Activated CD4-positive, alpha-beta T cell treated with anti-CD3 and anti-CD28 coated beads, Interleukin-2, amount 10 ng/mL, durations not matched to agents 7 days and 5 days (primary cell): ENCODE measurements at regions of chr17 and their contacts with region 1.

Region 1: DNA sequence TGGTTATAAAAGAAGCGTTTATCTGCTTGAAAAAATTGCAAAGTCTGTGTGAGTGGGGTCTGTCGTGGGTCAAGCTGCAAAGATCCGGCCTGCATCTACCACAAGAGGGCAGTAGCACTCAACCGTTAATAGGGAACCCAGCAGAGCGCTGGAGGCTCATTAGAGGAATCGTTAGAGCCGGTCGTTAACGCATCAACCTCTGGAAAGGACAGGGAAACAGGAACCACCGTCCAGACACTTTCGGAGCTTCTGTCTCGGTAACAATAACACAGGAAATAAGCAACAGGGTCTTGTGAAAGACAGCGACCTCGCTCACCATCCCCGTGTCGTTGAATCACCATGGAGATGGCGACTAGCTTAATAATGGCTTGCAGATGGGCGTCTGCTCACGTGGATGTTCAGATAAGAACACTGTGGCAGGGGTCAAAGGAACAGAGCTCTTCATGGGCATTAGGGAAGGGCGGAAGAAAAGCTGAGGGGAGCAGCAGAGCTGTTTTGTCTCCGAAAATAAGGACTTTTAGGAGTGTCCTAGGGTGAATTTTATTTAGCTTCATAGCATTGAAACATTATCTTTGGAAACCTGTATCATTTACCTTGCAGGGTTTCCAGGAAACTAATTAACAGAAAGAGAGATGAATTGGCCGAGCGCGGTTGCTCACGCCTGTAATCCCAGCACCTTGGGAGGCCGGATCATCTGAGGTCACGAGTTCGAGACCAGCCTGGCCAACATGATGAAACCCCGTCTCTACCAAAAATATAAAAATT is 11.9 kb upstream of the NSRP1 start:
- DNase-seq: peak; percentile 79
- H3K4me3 Mint-ChIP-seq: peak overlapping the region; percentile 71
- H3K27ac Mint-ChIP-seq: no peak overlapping the region
- H3K4me1 Mint-ChIP-seq: peaks cover 6% of the 10 kb centered on the region
- H3K27me3 Mint-ChIP-seq: peaks cover 22% of the 10 kb centered on the region

Region 2: GRCh38 chr17:29977836-29978235 is 126.9 kb before region 1 on chr17:
- CTCF ChIA-PET with region 1: no interaction called
- POLR2A ChIA-PET with region 1: no interaction called
- DNase-seq: no peak
- H3K4me3 Mint-ChIP-seq: no peak overlapping the region
- H3K27ac Mint-ChIP-seq: no peak overlapping the region
- H3K4me1 Mint-ChIP-seq: no peaks in the 10 kb centered on the region
- H3K27me3 Mint-ChIP-seq: peaks cover 18% of the 10 kb centered on the region

Region 3: DNA sequence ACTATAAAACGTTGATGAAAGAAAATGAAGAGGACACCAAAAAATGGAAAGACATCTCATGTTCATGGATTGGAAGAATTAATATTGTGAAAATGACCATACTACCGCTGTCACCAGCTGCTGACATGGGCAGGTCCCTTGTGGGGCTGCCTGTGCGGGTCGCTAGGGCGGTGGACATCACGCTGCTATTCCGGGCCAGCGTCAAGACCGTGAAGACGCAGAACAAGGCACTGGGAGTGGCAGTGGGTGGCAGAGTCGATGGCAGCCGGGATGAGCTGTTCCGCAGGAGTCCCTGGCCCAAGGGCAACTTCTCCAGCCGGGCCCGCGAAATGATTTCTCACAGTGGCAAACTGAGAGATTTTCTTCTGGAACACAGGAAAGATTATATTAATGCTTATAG is 36.3 kb before region 1 on chr17:
- CTCF ChIA-PET with region 1: no interaction called
- POLR2A ChIA-PET with region 1: no interaction called
- DNase-seq: no peak
- H3K4me3 Mint-ChIP-seq: no peak overlapping the region
- H3K27ac Mint-ChIP-seq: no peak overlapping the region
- H3K4me1 Mint-ChIP-seq: no peaks in the 10 kb centered on the region
- H3K27me3 Mint-ChIP-seq: peaks cover 34% of the 10 kb centered on the region

Region 4: DNA sequence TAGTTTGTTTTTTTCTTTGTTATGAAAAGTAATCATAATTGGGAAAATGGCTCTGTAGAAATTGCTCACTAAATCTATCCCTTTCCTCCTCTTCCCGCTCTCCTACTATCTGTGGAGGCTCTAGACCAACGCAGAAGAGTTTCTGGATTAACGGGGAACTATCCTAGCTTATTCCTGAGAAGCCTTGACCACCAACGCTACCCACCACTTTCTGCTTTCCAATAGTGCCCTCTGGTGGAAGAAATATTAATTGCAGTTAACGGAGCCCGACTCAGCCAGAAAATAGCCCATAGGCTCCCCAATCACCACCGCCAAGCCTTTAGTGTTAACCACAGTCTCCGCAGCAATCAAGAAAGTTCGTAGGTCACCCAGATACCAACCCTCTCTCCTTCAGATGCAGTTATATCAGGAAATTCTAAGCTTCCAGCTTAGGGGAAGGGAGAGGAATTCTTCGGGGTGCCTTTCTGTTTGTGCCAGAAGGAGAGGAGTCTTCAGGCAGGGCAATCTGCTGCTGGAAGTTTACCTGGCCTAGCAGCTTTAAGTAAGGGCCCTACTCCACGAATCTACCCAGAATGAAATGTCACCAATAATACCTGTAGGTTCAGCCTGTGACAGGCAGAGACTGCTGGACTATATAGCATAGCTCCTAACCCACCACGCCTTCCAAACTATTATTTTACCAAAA is 11.2 kb before region 1 on chr17:
- CTCF ChIA-PET with region 1: interaction called, 30 read pairs
- POLR2A ChIA-PET with region 1: no interaction called
- DNase-seq: peak; percentile 57
- H3K4me3 Mint-ChIP-seq: no peak overlapping the region
- H3K27ac Mint-ChIP-seq: no peak overlapping the region
- H3K4me1 Mint-ChIP-seq: peaks cover 6% of the 10 kb centered on the region
- H3K27me3 Mint-ChIP-seq: peaks cover 30% of the 10 kb centered on the region

Region 5: GRCh38 chr17:30124273-30124796 is 19.6 kb after region 1 on chr17:
- CTCF ChIA-PET with region 1: interaction called, 12 read pairs
- POLR2A ChIA-PET with region 1: no interaction called
- DNase-seq: no peak
- H3K4me3 Mint-ChIP-seq: no peak overlapping the region
- H3K27ac Mint-ChIP-seq: no peak overlapping the region
- H3K4me1 Mint-ChIP-seq: peaks cover 35% of the 10 kb centered on the region
- H3K27me3 Mint-ChIP-seq: no peaks in the 10 kb centered on the region

Region 6: DNA sequence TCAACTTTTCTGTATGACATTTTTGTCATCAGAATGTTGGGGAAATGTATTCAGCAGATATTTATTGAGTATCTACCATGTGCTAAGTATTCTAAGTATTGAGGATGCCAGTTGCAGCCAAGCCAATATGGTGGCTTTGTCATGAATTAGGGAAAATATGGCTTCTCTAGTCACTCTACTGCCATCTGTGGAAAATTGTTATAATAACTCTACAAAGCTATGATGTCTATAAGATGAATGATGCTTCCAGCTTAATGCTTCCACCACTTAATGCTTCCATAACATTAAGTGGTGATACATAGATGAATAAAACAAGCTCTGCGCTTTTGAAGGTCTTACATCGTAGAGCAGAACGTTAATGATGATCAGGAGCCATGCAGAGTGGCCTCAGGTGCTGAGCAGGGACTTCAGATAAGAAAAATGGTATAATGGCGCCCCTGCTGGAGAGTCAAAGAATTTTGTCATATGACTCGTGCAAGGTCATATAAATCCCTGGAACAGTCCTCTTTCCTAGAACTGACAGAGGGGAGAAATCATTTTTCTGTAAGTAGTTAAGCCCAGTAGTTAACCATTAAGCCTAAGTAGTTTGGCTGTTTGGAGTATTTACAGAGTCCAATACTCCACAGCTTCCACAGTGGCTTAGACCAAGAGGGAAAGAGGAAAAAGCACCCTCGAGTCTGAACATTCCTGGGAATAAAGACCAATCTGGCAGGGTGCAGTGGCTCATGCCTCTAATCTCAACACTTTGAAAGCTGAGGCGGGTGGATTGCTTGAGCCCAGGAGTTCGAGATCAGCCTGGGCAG is 231.8 kb after region 1 on chr17:
- CTCF ChIA-PET with region 1: interaction called, 25 read pairs
- POLR2A ChIA-PET with region 1: interaction called, 3 read pairs
- DNase-seq: peak; percentile 78
- H3K4me3 Mint-ChIP-seq: no peak overlapping the region
- H3K27ac Mint-ChIP-seq: no peak overlapping the region
- H3K4me1 Mint-ChIP-seq: peaks cover 39% of the 10 kb centered on the region
- H3K27me3 Mint-ChIP-seq: no peaks in the 10 kb centered on the region